Heart right ventricle (tissue), 16 donors: ENCODE measurements at regions of chr12 and their contacts with region 1.

Region 1: GRCh38 chr12:9999016-9999415 is at the start of gene CLEC1B:
- DNase-seq: no peak
- ATAC-seq: no peak
- H3K4me3 ChIP-seq: no peak within 1 kb of the TSS
- H3K27ac ChIP-seq: no peak within 1 kb of the TSS
- H3K4me1 ChIP-seq: peaks cover 0 to 3% (median 0%) of the 10 kb centered on the region in 9 donors
- H3K27me3 ChIP-seq: peaks cover 0 to under 1% (median 0%) of the 10 kb centered on the region in 7 donors
- CTCF ChIP-seq: no peak
- total RNA-seq, gene CLEC1B: not detected

Region 2: GRCh38 chr12:10033783-10034545 is 34.9 kb after region 1 on chr12:
- intact Hi-C with region 1: loop called in 1 of 10 experiments (anchors 2 kb)
- DNase-seq: no peak
- ATAC-seq: no peak
- H3K4me3 ChIP-seq: no peak overlapping the region
- H3K27ac ChIP-seq: peak overlapping the region in 1 of 10 donors; percentile 3
- H3K4me1 ChIP-seq: peaks cover 0 to 12% (median 0%) of the 10 kb centered on the region in 9 donors
- H3K27me3 ChIP-seq: no peaks in the 10 kb centered on the region
- CTCF ChIP-seq: peak; percentile 41 to 81 (median 64)

Region 3: GRCh38 chr12:10113080-10113479 is 114.1 kb after region 1 on chr12:
- intact Hi-C with region 1: no loop called
- DNase-seq: no peak
- ATAC-seq: no peak
- H3K4me3 ChIP-seq: no peak overlapping the region
- H3K27ac ChIP-seq: no peak overlapping the region
- H3K4me1 ChIP-seq: no peaks in the 10 kb centered on the region
- H3K27me3 ChIP-seq: no peaks in the 10 kb centered on the region
- CTCF ChIP-seq: no peak

Region 4: GRCh38 chr12:10849425-10849878 is 850.4 kb after region 1 on chr12 and contains the start of gene PRR4:
- intact Hi-C with region 1: no loop called
- DNase-seq: no peak
- ATAC-seq: no peak
- H3K4me3 ChIP-seq: no peak within 1 kb of the TSS
- H3K27ac ChIP-seq: no peak within 1 kb of the TSS
- H3K4me1 ChIP-seq: peaks cover 0 to 4% (median 0%) of the 10 kb centered on the region in 9 donors
- H3K27me3 ChIP-seq: no peaks in the 10 kb centered on the region
- CTCF ChIP-seq: no peak
- total RNA-seq, gene PRR4: 1.4 to 4.2 (median 1.9) TPM